Caco-2 (cell line): ENCODE measurements at regions of chr15 and their contacts with region 1.

Region 1: GRCh38 chr15:41989259-41989933 is 17.0 kb upstream of the EHD4 start:
- DNase-seq: peak; percentile 86 to 94
- H3K4me3 ChIP-seq: no peak overlapping the region
- H3K4me3 Mint-ChIP-seq: no peak overlapping the region
- H3K27ac Mint-ChIP-seq: peak overlapping the region; percentile 29
- H3K4me1 ChIP-seq: peaks cover 18% of the 10 kb centered on the region
- H3K4me1 Mint-ChIP-seq: peaks cover 14% of the 10 kb centered on the region
- H3K27me3 ChIP-seq: no peaks in the 10 kb centered on the region
- H3K27me3 Mint-ChIP-seq: no peaks in the 10 kb centered on the region
- CTCF ChIP-seq: peak; percentile 96 to 99

Region 2: GRCh38 chr15:41756198-41756597 is 233.2 kb before region 1 on chr15:
- CTCF ChIA-PET with region 1: no interaction called
- POLR2A ChIA-PET with region 1: no interaction called
- intact Hi-C with region 1: no loop called
- DNase-seq: no peak
- H3K4me3 ChIP-seq: no peak overlapping the region
- H3K4me3 Mint-ChIP-seq: no peak overlapping the region
- H3K27ac Mint-ChIP-seq: no peak overlapping the region
- H3K4me1 ChIP-seq: no peaks in the 10 kb centered on the region
- H3K4me1 Mint-ChIP-seq: no peaks in the 10 kb centered on the region
- H3K27me3 ChIP-seq: no peaks in the 10 kb centered on the region
- H3K27me3 Mint-ChIP-seq: no peaks in the 10 kb centered on the region
- CTCF ChIP-seq: no peak

Region 3: GRCh38 chr15:41917767-41918430 is 71.5 kb before region 1 on chr15:
- CTCF ChIA-PET with region 1: no interaction called
- POLR2A ChIA-PET with region 1: no interaction called
- intact Hi-C with region 1: no loop called
- DNase-seq: no peak
- H3K4me3 ChIP-seq: no peak overlapping the region
- H3K4me3 Mint-ChIP-seq: no peak overlapping the region
- H3K27ac Mint-ChIP-seq: no peak overlapping the region
- H3K4me1 ChIP-seq: peaks cover 24% of the 10 kb centered on the region
- H3K4me1 Mint-ChIP-seq: peaks cover 24% of the 10 kb centered on the region
- H3K27me3 ChIP-seq: no peaks in the 10 kb centered on the region
- H3K27me3 Mint-ChIP-seq: no peaks in the 10 kb centered on the region
- CTCF ChIP-seq: no peak

Region 4: DNA sequence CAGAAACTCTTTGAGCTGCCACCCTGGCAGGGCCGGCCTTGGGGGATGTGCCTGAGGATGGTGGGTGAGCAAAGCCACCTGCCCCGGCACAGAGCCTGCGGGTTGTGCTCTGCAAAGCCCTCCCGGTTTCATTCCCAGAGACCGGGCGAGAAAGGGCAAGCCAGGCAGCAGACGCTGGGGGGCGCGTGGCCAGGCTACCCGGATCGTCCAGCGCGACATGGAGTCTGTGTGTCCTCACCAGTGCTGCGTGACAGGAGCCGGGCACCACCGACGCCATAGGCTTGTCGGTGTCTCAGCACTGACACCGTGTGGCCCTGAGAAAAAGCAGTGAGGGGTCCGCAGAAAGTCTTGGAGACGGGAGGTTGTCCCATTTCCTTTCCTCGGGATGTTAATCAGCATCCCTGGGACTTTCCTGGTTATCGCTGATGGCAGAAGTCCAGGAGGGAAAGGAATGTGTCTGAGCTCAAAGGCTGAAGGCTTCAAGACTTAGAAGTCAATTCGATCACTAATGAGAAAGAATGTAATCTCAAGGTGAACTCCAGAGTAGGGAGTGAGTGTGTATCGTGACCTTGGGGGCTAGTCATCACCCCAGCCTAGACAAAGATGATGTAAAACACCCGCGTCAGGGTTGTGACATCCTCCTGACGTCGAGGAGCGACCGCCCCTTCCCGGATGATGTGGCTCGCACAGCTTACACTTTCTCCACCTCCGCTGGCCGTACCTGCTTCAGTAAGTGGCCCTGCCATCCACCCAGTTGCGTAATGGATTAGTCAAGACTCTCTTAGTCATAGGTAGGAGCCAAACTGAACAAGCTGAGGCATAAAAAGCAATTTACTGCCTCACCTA is 67.8 kb after region 1 on chr15:
- CTCF ChIA-PET with region 1: interaction called, 23 read pairs
- POLR2A ChIA-PET with region 1: interaction called, 6 read pairs
- intact Hi-C with region 1: loop called (anchors 1 kb)
- DNase-seq: peak; percentile 92 to 96
- H3K4me3 ChIP-seq: peak overlapping the region; percentile 33
- H3K4me3 Mint-ChIP-seq: peak overlapping the region; percentile 76
- H3K27ac Mint-ChIP-seq: peak overlapping the region; percentile 93
- H3K4me1 ChIP-seq: peaks cover 19% of the 10 kb centered on the region
- H3K4me1 Mint-ChIP-seq: peaks cover 7% of the 10 kb centered on the region
- H3K27me3 ChIP-seq: no peaks in the 10 kb centered on the region
- H3K27me3 Mint-ChIP-seq: no peaks in the 10 kb centered on the region
- CTCF ChIP-seq: peak; percentile 73 to 87

Region 5: DNA sequence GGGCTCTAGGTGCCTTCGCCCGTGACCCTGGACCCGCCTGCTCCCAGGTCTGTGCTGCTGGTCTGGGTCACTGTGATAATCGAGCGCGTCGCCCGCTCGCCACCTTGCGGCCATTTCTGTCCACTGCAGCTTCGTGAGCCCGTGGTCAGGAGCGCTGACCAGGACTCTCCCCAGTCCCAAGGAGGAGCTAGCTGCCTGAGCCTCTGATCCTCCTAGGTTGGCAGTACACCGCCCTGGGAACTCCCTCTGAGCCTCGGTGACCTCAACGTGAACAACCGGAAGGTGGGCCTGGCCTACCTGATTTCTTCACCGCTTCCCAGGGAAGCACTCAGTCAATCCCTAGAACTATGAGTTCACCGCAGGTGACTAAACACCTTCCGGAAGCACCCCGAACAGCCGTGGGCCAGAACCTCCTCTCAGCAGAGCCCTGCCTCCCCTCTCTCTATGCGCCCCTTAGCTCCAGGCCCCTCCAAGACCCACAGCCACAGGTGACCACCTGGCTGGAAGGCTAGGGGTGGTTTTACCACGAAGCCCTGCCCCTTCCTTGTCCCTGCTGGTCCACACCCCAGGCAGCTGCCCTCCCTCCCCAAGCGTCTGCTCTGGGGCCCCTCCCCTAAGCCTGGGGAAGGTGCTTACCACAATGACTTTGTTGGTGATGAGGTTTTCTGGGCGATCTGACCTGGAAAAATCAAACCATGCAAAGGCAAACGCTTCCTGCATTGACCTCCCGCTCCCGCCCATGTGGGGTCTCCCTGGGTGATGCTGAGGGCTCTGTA is 95.3 kb after region 1 on chr15:
- CTCF ChIA-PET with region 1: interaction called, 24 read pairs
- POLR2A ChIA-PET with region 1: no interaction called
- intact Hi-C with region 1: loop called (anchors 1 kb)
- DNase-seq: peak; percentile 69 to 81
- H3K4me3 ChIP-seq: no peak overlapping the region
- H3K4me3 Mint-ChIP-seq: no peak overlapping the region
- H3K27ac Mint-ChIP-seq: no peak overlapping the region
- H3K4me1 ChIP-seq: no peaks in the 10 kb centered on the region
- H3K4me1 Mint-ChIP-seq: peaks cover 8% of the 10 kb centered on the region
- H3K27me3 ChIP-seq: no peaks in the 10 kb centered on the region
- H3K27me3 Mint-ChIP-seq: no peaks in the 10 kb centered on the region
- CTCF ChIP-seq: peak; percentile 90 to 92

Region 6: DNA sequence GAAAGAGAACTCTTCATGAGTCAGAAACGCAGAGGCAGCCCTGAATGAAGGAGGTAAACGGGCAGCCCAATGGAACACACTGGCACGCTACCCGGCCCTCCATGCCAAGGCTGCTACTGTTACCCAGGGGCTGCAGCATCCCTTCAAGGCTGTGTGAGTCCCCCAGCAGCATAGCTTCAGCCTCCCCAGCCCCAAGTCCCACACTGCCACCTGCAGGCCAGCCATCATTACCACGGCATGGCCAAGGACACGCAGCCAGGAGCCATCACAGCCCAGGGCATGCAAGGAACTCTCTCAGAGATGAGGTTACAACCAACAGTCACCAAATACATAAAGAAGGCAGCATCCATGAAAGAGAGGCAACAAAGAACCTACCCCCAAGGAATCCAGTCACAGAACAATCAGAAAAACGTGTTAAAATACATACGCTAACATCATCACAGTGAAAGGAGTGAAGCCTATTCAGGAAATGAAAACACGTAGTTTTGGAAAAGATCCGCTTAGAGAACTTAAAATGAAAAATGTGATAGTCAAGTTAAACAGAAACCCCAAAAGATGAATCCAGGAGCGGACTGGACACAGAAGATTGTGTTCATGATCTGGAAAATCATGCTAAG is 144.6 kb after region 1 on chr15:
- CTCF ChIA-PET with region 1: no interaction called
- POLR2A ChIA-PET with region 1: no interaction called
- intact Hi-C with region 1: loop called (anchors 2 kb)
- DNase-seq: peak; percentile 61 to 72
- H3K4me3 ChIP-seq: no peak overlapping the region
- H3K4me3 Mint-ChIP-seq: no peak overlapping the region
- H3K27ac Mint-ChIP-seq: peak overlapping the region; percentile 81
- H3K4me1 ChIP-seq: peaks cover 4% of the 10 kb centered on the region; the same call in 1 of the 2 replicates
- H3K4me1 Mint-ChIP-seq: peaks cover 7% of the 10 kb centered on the region
- H3K27me3 ChIP-seq: no peaks in the 10 kb centered on the region
- H3K27me3 Mint-ChIP-seq: peaks cover 4% of the 10 kb centered on the region
- CTCF ChIP-seq: peak; percentile 55 to 59